GM13977 (cell line): ENCODE measurements at regions of chr3 and their contacts with region 1.

Region 1: DNA sequence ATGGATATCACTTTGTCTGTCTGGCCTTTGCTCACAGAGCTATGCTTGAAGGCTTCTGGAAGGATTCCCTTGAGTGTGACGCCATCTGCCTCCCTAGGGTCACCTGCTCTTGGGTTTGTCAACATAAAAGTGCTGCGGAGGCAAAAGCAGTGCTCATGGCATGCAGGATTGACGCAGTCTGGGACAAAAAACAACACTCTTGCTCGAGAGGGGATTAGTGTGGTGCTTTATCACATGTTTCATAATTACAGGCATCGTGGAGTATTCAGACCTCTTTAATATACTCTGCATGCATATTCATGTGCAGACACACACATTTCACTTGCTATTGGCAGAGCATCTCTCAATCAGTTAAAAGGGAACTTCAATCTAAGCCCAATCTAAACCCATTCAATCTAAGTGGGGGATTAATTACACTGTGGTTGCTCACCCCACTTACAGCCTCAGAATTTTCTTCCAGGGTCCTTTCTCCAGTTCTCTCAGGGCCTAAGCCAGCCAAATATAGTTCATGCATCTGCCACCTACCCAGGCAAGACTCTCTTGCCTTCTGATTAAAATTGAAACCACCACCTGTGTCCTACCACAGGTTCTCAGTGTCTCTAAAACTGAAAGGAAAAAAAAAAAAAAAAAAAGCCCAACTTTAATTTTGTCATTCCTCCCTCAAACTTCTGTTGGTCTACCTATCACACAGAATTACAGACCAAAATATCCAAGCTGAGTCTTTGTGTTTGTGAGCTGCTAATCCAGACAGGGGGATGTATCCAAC is 75.6 kb downstream of the BFSP2 start:
- DNase-seq: peak; percentile 84
- CTCF ChIP-seq: no peak

Region 2: GRCh38 chr3:133573054-133573628 is 97.7 kb after region 1 on chr3:
- in situ Hi-C with region 1: loop called (anchors 10 kb)
- DNase-seq: peak; percentile 93
- CTCF ChIP-seq: no peak